Breast epithelium (tissue), 4 donors: ENCODE measurements at regions of chr4 and their contacts with region 1.

Region 1: DNA sequence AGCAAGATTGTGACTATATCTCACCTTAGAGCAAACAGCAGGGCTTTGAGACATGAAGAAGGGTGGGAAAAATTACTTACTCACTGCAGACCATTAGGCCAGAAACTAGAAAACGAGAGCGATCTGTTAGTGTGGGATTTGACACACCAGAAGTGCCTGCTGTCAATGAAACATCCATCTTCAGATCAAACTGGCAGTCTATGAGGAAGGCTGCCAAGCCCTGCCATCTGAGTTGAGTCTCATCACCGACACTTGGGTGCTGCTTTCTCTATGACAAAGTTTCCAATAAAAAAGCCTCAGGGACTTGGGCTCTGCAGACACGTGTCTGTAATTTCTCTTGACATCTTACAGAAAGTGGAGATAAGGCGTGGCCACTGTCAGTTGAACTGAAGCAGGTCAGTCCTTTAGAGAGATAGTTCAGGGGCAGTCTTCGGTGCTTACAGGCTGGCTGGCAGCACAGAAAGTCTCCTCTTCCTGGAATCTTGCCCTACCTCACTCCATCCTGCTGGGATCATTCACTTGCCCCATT is 40.1 kb upstream of the LDB2 start:
- DNase-seq: no peak
- H3K4me3 ChIP-seq: no peak overlapping the region
- H3K27ac ChIP-seq: no peak overlapping the region
- H3K4me1 ChIP-seq: no peaks in the 10 kb centered on the region
- H3K27me3 ChIP-seq: no peaks in the 10 kb centered on the region
- CTCF ChIP-seq: no peak
- POLR2A ChIP-seq: no peak

Region 2: GRCh38 chr4:16843831-16844508 is 94.6 kb before region 1 on chr4:
- intact Hi-C with region 1: no loop called
- DNase-seq: no peak
- H3K4me3 ChIP-seq: no peak overlapping the region
- H3K27ac ChIP-seq: no peak overlapping the region
- H3K4me1 ChIP-seq: no peaks in the 10 kb centered on the region
- H3K27me3 ChIP-seq: no peaks in the 10 kb centered on the region
- CTCF ChIP-seq: no peak
- POLR2A ChIP-seq: no peak

Region 3: GRCh38 chr4:16967722-16968121 is 29.1 kb after region 1 on chr4:
- intact Hi-C with region 1: loop called (anchors 2 kb)
- DNase-seq: no peak
- H3K4me3 ChIP-seq: no peak overlapping the region
- H3K27ac ChIP-seq: peak overlapping the region in 1 of 2 donors; percentile 12
- H3K4me1 ChIP-seq: no peaks in the 10 kb centered on the region
- H3K27me3 ChIP-seq: no peaks in the 10 kb centered on the region
- CTCF ChIP-seq: no peak
- POLR2A ChIP-seq: no peak